ENCODE measurements at regions of chr3 and their contacts with region 1.

Region 1: DNA sequence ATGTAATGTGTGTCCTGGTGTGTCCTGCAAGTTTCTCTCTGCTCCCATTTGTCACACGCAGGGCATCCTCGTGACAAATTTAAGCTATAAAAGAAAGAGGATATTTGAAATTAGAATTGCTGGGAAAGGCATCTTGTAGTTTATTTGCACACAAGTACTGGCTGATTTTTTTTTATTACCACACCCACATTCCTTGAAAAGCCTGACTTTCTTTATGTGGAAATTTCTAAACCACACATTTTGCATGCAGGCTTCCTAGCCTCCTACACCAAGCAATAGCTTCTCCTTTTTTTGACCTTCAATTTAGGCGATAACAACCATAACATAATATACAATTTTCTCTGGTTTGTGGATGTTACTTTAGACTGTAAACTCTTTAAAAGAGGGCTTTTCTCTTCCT is 126.1 kb downstream of the SERPINI1 start:
- DNase-seq: no peak
- H3K4me3 ChIP-seq: no peak overlapping the region
- H3K27ac ChIP-seq: no peak overlapping the region
- H3K4me1 ChIP-seq: peaks cover 30% of the 10 kb centered on the region
- CTCF ChIP-seq: no peak

Region 2: GRCh38 chr3:168714609-168715240 is 853.1 kb after region 1 on chr3:
- CTCF ChIA-PET with region 1: no interaction called
- POLR2A ChIA-PET with region 1: interaction called, 11 read pairs
- intact Hi-C with region 1: no loop called
- DNase-seq: no peak
- H3K4me3 ChIP-seq: no peak overlapping the region
- H3K27ac ChIP-seq: no peak overlapping the region
- H3K4me1 ChIP-seq: no peaks in the 10 kb centered on the region
- CTCF ChIP-seq: no peak